Activated CD8-positive, alpha-beta T cell treated with anti-CD3 and anti-CD28 coated beads, Interleukin-2, amount 10 ng/mL, durations not matched to agents 7 days and 5 days (primary cell): ENCODE measurements at regions of chr12 and their contacts with region 1.

Region 1: GRCh38 chr12:66130277-66131066 is at the start of gene LLPH:
- DNase-seq: peak; percentile 94
- ATAC-seq: peak; percentile 95
- H3K4me3 Mint-ChIP-seq: peak within 1 kb of the TSS; percentile 98
- H3K27ac Mint-ChIP-seq: peak within 1 kb of the TSS; percentile 99
- H3K4me1 Mint-ChIP-seq: peaks cover 62% of the 10 kb centered on the region
- H3K27me3 Mint-ChIP-seq: no peaks in the 10 kb centered on the region
- total RNA-seq, gene LLPH: 35.9 to 39.1 TPM

Region 2: DNA sequence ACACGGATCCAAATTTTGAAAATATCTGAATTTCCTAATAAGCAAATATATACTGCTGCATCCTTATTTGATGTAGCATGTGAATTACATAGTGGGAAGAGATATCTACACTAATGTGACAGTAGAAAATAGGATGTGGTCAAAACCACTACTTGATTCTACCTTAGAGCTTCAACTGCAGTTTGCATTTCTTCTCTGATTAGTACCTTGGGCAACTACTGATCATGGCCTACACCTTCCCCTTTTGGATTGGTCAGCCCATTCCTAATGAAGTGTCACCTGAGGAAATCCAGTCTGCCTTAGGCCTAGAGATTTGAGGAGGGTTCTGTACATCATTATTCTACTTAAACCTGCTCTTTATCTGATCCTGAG is 10.6 kb before region 1 on chr12:
- CTCF ChIA-PET with region 1: interaction called, 6 read pairs
- POLR2A ChIA-PET with region 1: interaction called, 15 read pairs
- DNase-seq: no peak
- ATAC-seq: peak; percentile 52
- H3K4me3 Mint-ChIP-seq: no peak overlapping the region
- H3K27ac Mint-ChIP-seq: peak overlapping the region; percentile 32
- H3K4me1 Mint-ChIP-seq: peaks cover 18% of the 10 kb centered on the region
- H3K27me3 Mint-ChIP-seq: no peaks in the 10 kb centered on the region

Region 3: GRCh38 chr12:66144791-66145754 is 14.6 kb after region 1 on chr12:
- CTCF ChIA-PET with region 1: interaction called, 19 read pairs
- POLR2A ChIA-PET with region 1: interaction called, 14 read pairs
- DNase-seq: peak; percentile 28
- ATAC-seq: peak; percentile 49
- H3K4me3 Mint-ChIP-seq: no peak overlapping the region
- H3K27ac Mint-ChIP-seq: peak overlapping the region; percentile 78
- H3K4me1 Mint-ChIP-seq: peaks cover 17% of the 10 kb centered on the region
- H3K27me3 Mint-ChIP-seq: no peaks in the 10 kb centered on the region

Region 4: DNA sequence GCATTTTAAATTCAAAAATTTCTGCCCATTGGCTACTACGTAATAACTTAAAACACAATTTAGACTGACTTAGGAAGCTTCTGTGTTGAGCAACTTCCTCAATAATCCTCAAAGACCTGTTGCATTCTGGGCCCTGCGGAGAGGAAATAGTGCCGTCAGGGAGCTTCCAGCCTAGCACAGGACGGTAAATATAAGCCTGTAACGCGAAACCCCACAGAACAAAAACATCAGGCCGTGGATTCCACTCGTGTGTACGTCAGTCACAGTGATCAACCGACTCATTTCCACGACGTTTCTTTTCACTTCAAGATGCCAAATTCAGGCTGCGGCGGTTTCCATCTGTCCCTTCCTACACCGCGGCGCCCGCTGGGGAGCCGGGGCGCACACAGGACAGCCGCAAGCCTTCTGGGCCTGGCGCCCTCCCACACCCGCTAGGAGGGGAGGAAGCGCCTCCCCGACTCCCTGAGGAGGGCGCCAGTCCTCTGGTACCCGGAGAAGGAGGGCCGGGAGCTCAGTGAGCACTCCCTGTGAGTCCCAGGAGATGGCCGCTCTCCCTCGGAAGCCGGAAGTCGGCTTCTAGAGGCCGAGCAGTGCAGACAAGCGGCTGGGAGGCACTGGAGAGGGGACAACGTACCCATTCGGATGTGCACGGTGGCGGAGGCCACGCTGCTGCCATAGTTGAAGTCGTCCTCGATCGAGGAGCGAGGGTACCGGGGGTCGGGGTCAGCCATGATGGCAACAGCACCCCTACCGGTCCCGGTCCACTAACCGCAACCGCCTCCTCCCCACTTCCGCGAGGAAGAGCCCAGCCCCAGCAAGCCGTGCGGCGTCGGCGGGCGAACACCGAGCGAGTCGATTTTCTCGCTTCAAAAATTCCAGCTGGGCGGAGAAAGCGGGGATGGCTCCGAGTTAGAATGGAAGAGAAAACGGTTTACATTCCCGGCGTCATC is 39.0 kb after region 1 on chr12 and contains the start of gene TMBIM4:
- CTCF ChIA-PET with region 1: interaction called, 7 read pairs
- POLR2A ChIA-PET with region 1: interaction called, 59 read pairs
- DNase-seq: peak; percentile 89
- ATAC-seq: peak; percentile 87
- H3K4me3 Mint-ChIP-seq: peak within 1 kb of the TSS; percentile 84
- H3K27ac Mint-ChIP-seq: peak within 1 kb of the TSS; percentile 99
- H3K4me1 Mint-ChIP-seq: peaks cover 43% of the 10 kb centered on the region
- H3K27me3 Mint-ChIP-seq: no peaks in the 10 kb centered on the region
- total RNA-seq, gene TMBIM4: 60.5 to 61.6 TPM